Heart left ventricle (tissue), 16 donors: ENCODE measurements at regions of chr10 and their contacts with region 1.

Region 1: GRCh38 chr10:110901954-110902819 is 16.8 kb downstream of the BBIP1 start:
- DNase-seq: no peak
- ATAC-seq: peak in 1 of 4 donors; percentile 26
- H3K4me3 ChIP-seq: no peak overlapping the region
- H3K27ac ChIP-seq: peak overlapping the region in 1 of 12 donors; percentile 4
- H3K4me1 ChIP-seq: peaks cover 0 to 9% (median 2%) of the 10 kb centered on the region in 12 donors
- H3K27me3 ChIP-seq: no peaks in the 10 kb centered on the region
- CTCF ChIP-seq: no peak
- POLR2A ChIP-seq: no peak

Region 2: GRCh38 chr10:110399163-110400094 is 502.8 kb before region 1 on chr10:
- intact Hi-C with region 1: loop called in 1 of 10 experiments (anchors 10 kb)
- DNase-seq: peak in 2 of 5 donors; percentile 33 to 55
- ATAC-seq: peak in 2 of 4 donors; percentile 52 to 62
- H3K4me3 ChIP-seq: no peak overlapping the region
- H3K27ac ChIP-seq: peak overlapping the region in 2 of 12 donors; percentile 53 to 59
- H3K4me1 ChIP-seq: peaks cover 0 to 30% (median 9%) of the 10 kb centered on the region in 12 donors
- H3K27me3 ChIP-seq: no peaks in the 10 kb centered on the region
- CTCF ChIP-seq: no peak
- POLR2A ChIP-seq: no peak